Gastrocnemius medialis (tissue), 4 donors: ENCODE measurements at regions of chr9 and their contacts with region 1.

Region 1: DNA sequence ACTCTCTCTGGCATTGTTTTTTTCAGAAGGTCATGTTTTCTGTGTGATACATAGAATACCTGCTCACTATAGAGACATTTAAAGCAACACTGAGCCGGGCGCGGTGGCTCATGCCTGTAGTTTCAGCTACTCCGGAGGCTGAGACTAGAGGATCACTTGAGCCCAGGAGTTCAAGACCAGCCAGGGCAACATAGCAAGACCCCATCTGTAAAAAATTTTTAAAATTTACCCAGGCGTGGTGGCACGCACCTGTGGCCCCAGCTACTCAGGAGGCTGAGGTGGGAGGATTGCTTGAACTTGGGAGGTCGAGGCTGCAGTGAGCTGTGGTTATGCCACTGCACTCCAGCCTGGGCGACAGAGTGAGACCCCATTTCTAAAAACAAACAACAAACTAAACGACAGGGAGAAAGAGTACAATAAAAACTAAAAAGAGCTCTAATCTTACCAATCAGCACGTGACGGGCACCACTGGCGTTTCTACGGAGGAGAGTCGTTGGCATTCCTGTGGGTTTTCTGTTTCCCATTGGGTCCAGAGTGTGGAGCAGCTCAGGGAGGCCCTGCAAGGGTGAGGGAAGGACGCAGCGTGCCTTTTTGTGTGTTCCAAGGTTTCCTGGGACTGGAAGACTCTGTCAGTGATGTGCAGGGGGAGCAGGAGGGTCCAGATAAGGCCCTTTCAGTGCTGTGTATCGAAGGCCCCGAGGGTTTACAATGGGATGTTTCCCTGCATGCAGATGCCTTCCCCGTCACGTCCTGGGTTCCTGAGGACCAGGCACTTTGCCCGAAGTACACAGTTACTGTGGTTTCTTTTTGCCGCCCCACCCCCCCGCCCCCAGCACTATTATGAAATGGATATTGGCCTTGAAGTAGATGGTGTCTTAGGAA is 7.2 kb upstream of the RNU6ATAC start:
- DNase-seq: peak in 1 of 2 donors; percentile 47
- ATAC-seq: peak in 1 of 2 donors; percentile 13
- H3K4me3 ChIP-seq: no peak overlapping the region
- H3K27ac ChIP-seq: peak overlapping the region in 3 of 4 donors; percentile 19 to 64 (median 63)
- H3K4me1 ChIP-seq: peaks cover 16 to 20% of the 10 kb centered on the region in 2 donors
- H3K27me3 ChIP-seq: no peaks in the 10 kb centered on the region
- CTCF ChIP-seq: no peak
- POLR2A ChIP-seq: no peak

Region 2: GRCh38 chr9:133855802-133856521 is 315.6 kb before region 1 on chr9:
- in situ Hi-C with region 1: no loop called
- intact Hi-C with region 1: no loop called
- DNase-seq: peak; percentile 31 to 46
- ATAC-seq: peak; percentile 66 to 82
- H3K4me3 ChIP-seq: no peak overlapping the region
- H3K27ac ChIP-seq: peak overlapping the region in 3 of 4 donors; percentile 54 to 68 (median 57)
- H3K4me1 ChIP-seq: no peaks in the 10 kb centered on the region
- H3K27me3 ChIP-seq: peaks cover 0 to 3% (median 0%) of the 10 kb centered on the region in 3 donors
- CTCF ChIP-seq: no peak
- POLR2A ChIP-seq: no peak

Region 3: GRCh38 chr9:134217832-134218629 is 46.5 kb after region 1 on chr9:
- in situ Hi-C with region 1: no loop called
- intact Hi-C with region 1: loop called (anchors 1 kb)
- DNase-seq: peak in 1 of 2 donors; percentile 1
- ATAC-seq: peak; percentile 72 to 76
- H3K4me3 ChIP-seq: no peak overlapping the region
- H3K27ac ChIP-seq: no peak overlapping the region
- H3K4me1 ChIP-seq: peaks cover 0 to 5% of the 10 kb centered on the region in 2 donors
- H3K27me3 ChIP-seq: no peaks in the 10 kb centered on the region
- CTCF ChIP-seq: peak; percentile 25 to 51 (median 44)
- POLR2A ChIP-seq: no peak

Region 4: GRCh38 chr9:134492281-134492691 is 320.7 kb after region 1 on chr9:
- in situ Hi-C with region 1: no loop called
- intact Hi-C with region 1: no loop called
- DNase-seq: no peak
- ATAC-seq: peak in 1 of 2 donors; percentile 56
- H3K4me3 ChIP-seq: no peak overlapping the region
- H3K27ac ChIP-seq: no peak overlapping the region
- H3K4me1 ChIP-seq: no peaks in the 10 kb centered on the region
- H3K27me3 ChIP-seq: peaks cover 3 to 11% (median 7%) of the 10 kb centered on the region in 3 donors
- CTCF ChIP-seq: no peak
- POLR2A ChIP-seq: no peak